Cardiac septum (tissue), 1 donor: ENCODE measurements at regions of chr16 and their contacts with region 1.

Region 1: GRCh38 chr16:66344533-66345145 is 21.9 kb upstream of the CDH5 start:
- DNase-seq: no peak

Region 2: GRCh38 chr16:66270333-66270927 is 74.2 kb before region 1 on chr16:
- intact Hi-C with region 1: loop called (anchors 10 kb)
- DNase-seq: peak; percentile 91